T-cell (primary cell): ENCODE measurements at regions of chr6 and their contacts with region 1.

Region 1: DNA sequence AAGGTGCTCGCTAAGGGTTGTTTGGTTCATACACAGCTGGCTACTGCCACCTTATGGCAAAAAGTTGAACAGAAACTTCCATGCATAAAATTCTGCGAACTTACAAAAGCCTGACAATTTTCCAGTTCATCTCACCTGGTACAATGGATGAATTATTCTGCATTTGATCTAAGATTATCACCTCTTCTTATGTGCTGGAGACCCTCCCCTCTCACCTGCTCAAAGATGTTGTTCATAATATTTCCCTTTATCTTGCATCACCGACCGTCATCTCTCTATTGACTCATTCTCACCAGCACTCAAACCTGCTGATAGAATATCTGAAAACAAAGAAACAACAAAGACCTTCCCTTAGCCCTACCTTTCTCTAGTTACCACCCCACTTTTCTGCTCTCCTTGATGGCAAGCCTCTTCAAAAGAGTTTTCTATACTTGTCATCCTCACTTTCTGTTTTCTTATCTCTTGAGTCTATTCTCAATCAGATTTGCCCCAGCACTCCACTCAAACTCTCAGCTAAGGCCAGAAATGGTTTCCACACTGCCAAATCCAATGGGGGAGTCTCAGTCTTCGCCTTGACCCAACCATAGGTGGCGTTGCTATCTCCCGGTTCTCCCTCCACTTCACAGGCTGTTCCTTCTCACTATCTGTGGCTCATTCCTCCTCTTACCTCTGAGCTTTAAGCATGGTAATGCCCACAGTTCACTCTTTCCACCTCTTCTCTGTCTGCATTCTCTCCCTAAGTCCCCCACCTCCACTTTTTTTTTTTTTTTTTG is 25.8 kb downstream of the SNRNP48 start:
- DNase-seq: peak in 17 of 35 experiments; percentile 4 to 68 (median 15)
- ATAC-seq: peak; percentile 42 to 52 (median 44)
- H3K4me3 ChIP-seq: no peak overlapping the region
- H3K4me3 Mint-ChIP-seq: peak overlapping the region; percentile 2 to 43 (median 14)
- H3K27ac ChIP-seq: no peak overlapping the region
- H3K27ac Mint-ChIP-seq: peak overlapping the region; percentile 1 to 36
- H3K4me1 ChIP-seq: no peaks in the 10 kb centered on the region
- H3K4me1 Mint-ChIP-seq: peaks cover 11 to 20% (median 12%) of the 10 kb centered on the region in 3 donors
- H3K27me3 ChIP-seq: peaks cover 0 to 9% of the 10 kb centered on the region in 2 experiments
- H3K27me3 Mint-ChIP-seq: no peaks in the 10 kb centered on the region

Region 2: GRCh38 chr6:7276199-7276524 is 339.6 kb before region 1 on chr6:
- CTCF ChIA-PET with region 1: interaction called, 15 to 28 read pairs
- POLR2A ChIA-PET with region 1: no interaction called
- DNase-seq: no peak
- ATAC-seq: no peak
- H3K4me3 ChIP-seq: no peak overlapping the region
- H3K4me3 Mint-ChIP-seq: no peak overlapping the region
- H3K27ac ChIP-seq: no peak overlapping the region
- H3K27ac Mint-ChIP-seq: no peak overlapping the region
- H3K4me1 ChIP-seq: peaks cover 0 to 5% of the 10 kb centered on the region in 2 experiments
- H3K4me1 Mint-ChIP-seq: peaks cover 8 to 9% (median 8%) of the 10 kb centered on the region in 3 donors
- H3K27me3 ChIP-seq: no peaks in the 10 kb centered on the region
- H3K27me3 Mint-ChIP-seq: peaks cover 0 to 1% of the 10 kb centered on the region in 2 donors

Region 3: GRCh38 chr6:7389451-7390225 is 226.2 kb before region 1 on chr6 and contains the starts of genes CAGE1 and RIOK1:
- CTCF ChIA-PET with region 1: interaction called in 1 of 2 experiments, 3 read pairs
- POLR2A ChIA-PET with region 1: interaction called in 1 of 2 experiments, 10 read pairs
- DNase-seq: peak; percentile 85 to 96 (median 93)
- ATAC-seq: peak; percentile 91 to 97 (median 95)
- H3K4me3 ChIP-seq: peak within 1 kb of the TSS; percentile 85 to 87
- H3K4me3 Mint-ChIP-seq: peak within 1 kb of the TSS; percentile 82 to 98 (median 91)
- H3K27ac ChIP-seq: peak within 1 kb of the TSS; percentile 100
- H3K27ac Mint-ChIP-seq: peak within 1 kb of the TSS; percentile 97 to 99
- H3K4me1 ChIP-seq: peaks cover 16 to 26% of the 10 kb centered on the region in 2 experiments
- H3K4me1 Mint-ChIP-seq: peaks cover 44 to 51% (median 47%) of the 10 kb centered on the region in 3 donors
- H3K27me3 ChIP-seq: peaks cover 0 to 2% of the 10 kb centered on the region in 2 experiments
- H3K27me3 Mint-ChIP-seq: no peaks in the 10 kb centered on the region
- total RNA-seq, gene CAGE1: 0.09 to 0.75 (median 0.31) TPM in 4 of 5 donors, not detected in the other
- total RNA-seq, gene RIOK1: 27.4 to 42.9 (median 34.6) TPM

Region 4: GRCh38 chr6:7479801-7480266 is 136.0 kb before region 1 on chr6:
- CTCF ChIA-PET with region 1: no interaction called
- POLR2A ChIA-PET with region 1: no interaction called
- DNase-seq: no peak
- ATAC-seq: no peak
- H3K4me3 ChIP-seq: no peak overlapping the region
- H3K4me3 Mint-ChIP-seq: no peak overlapping the region
- H3K27ac ChIP-seq: no peak overlapping the region
- H3K27ac Mint-ChIP-seq: no peak overlapping the region
- H3K4me1 ChIP-seq: no peaks in the 10 kb centered on the region
- H3K4me1 Mint-ChIP-seq: no peaks in the 10 kb centered on the region
- H3K27me3 ChIP-seq: no peaks in the 10 kb centered on the region
- H3K27me3 Mint-ChIP-seq: peaks cover 0 to 5% of the 10 kb centered on the region in 2 donors

Region 5: GRCh38 chr6:7523922-7524321 is 91.9 kb before region 1 on chr6:
- CTCF ChIA-PET with region 1: no interaction called
- POLR2A ChIA-PET with region 1: no interaction called
- DNase-seq: no peak
- ATAC-seq: no peak
- H3K4me3 ChIP-seq: no peak overlapping the region
- H3K4me3 Mint-ChIP-seq: no peak overlapping the region
- H3K27ac ChIP-seq: no peak overlapping the region
- H3K27ac Mint-ChIP-seq: no peak overlapping the region
- H3K4me1 ChIP-seq: no peaks in the 10 kb centered on the region
- H3K4me1 Mint-ChIP-seq: no peaks in the 10 kb centered on the region
- H3K27me3 ChIP-seq: peaks cover 4 to 14% of the 10 kb centered on the region in 2 experiments
- H3K27me3 Mint-ChIP-seq: peaks cover 54 to 58% of the 10 kb centered on the region in 2 donors

Region 6: GRCh38 chr6:7628479-7628878 is 12.7 kb after region 1 on chr6:
- CTCF ChIA-PET with region 1: no interaction called
- POLR2A ChIA-PET with region 1: no interaction called
- DNase-seq: no peak
- ATAC-seq: no peak
- H3K4me3 ChIP-seq: no peak overlapping the region
- H3K4me3 Mint-ChIP-seq: no peak overlapping the region
- H3K27ac ChIP-seq: no peak overlapping the region
- H3K27ac Mint-ChIP-seq: no peak overlapping the region
- H3K4me1 ChIP-seq: no peaks in the 10 kb centered on the region
- H3K4me1 Mint-ChIP-seq: no peaks in the 10 kb centered on the region
- H3K27me3 ChIP-seq: peaks cover 0 to 6% of the 10 kb centered on the region in 2 experiments
- H3K27me3 Mint-ChIP-seq: peaks cover 6 to 7% of the 10 kb centered on the region in 2 donors